ENCODE measurements at regions of chr14 and their contacts with region 1.

Region 1: GRCh38 chr14:74493343-74494261 is at the start of gene ISCA2:
- DNase-seq: peak; percentile 100
- H3K4me3 ChIP-seq: peak within 1 kb of the TSS; percentile 89 to 97 (median 91)
- H3K27ac ChIP-seq: peak within 1 kb of the TSS; percentile 93 to 97 (median 94)
- H3K4me1 ChIP-seq: peaks cover 0 to 29% (median 23%) of the 10 kb centered on the region in 4 donors
- H3K27me3 ChIP-seq: no peaks in the 10 kb centered on the region
- CTCF ChIP-seq: no peak
- EP300 ChIP-seq: no peak
- POLR2A ChIP-seq: peak; percentile 51 to 60
- total RNA-seq, gene ISCA2: 8.6 to 15.7 (median 12.0) TPM

Region 2: DNA sequence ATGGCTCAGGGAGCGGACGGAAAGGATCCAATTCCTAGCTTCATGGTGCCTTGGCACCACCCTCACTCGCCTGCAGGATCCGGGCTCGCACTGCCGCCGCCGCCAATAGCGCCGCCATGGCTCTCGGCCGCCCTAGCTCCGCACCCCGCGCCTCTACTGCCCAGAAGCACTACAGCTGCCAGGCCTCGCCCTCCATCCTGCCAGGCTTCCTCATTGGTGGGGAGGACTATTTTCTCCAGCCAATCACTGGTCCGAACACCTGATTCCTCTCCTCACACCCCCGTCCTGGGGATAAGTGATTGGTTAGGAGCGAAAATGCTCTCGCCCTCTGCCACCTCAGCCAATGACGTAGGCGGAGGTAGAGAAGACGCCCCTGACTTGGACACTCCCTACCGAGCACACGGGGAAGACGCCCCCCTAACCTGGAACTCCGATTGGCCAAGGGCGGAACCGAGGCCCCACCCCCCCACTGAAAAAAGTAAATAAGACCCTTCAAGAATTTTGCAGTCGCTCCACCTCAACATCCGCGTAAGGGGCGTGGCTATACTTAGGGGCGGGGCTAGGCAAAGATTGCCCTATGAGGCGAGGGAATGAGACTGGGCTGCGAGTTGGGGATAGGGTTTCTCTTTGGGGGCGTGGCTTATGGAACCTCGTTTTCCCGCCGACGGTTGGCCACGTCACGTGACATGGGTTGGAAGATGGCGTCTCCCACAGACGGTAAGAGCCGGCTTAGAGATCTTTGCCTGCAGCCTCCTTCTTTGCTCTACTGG is 409.1 kb before region 1 on chr14 and contains the starts of genes ALDH6A1 and LIN52:
- intact Hi-C with region 1: loop called (anchors 10 kb)
- DNase-seq: peak; percentile 100
- H3K4me3 ChIP-seq: peak within 1 kb of the TSS; percentile 64 to 81 (median 76)
- H3K27ac ChIP-seq: peak within 1 kb of the TSS; percentile 84 to 93 (median 90)
- H3K4me1 ChIP-seq: peaks cover 0 to 27% (median 20%) of the 10 kb centered on the region in 4 donors
- H3K27me3 ChIP-seq: no peaks in the 10 kb centered on the region
- CTCF ChIP-seq: no peak
- EP300 ChIP-seq: peak in 1 of 4 donors; percentile 28
- POLR2A ChIP-seq: peak; percentile 87 to 94
- total RNA-seq, gene ALDH6A1: 19.9 to 33.5 (median 30.6) TPM
- total RNA-seq, gene LIN52: 9.1 to 11.1 (median 10.3) TPM

Region 3: GRCh38 chr14:74362361-74362915 is 131.2 kb before region 1 on chr14:
- intact Hi-C with region 1: loop called (anchors 5 kb)
- DNase-seq: peak; percentile 88
- H3K4me3 ChIP-seq: no peak overlapping the region
- H3K27ac ChIP-seq: no peak overlapping the region
- H3K4me1 ChIP-seq: peaks cover 0 to 4% (median 0%) of the 10 kb centered on the region in 4 donors
- H3K27me3 ChIP-seq: peaks cover 0 to 19% (median 0%) of the 10 kb centered on the region in 3 donors
- CTCF ChIP-seq: peak; percentile 66 to 97 (median 88)
- EP300 ChIP-seq: no peak
- POLR2A ChIP-seq: no peak

Measured in sigmoid colon (tissue), 7 donors.